WTC11 (cell line): ENCODE measurements at regions of chr5 and their contacts with region 1.

Region 1: GRCh38 chr5:69024241-69024651 is 69.6 kb upstream of the SLC30A5 start:
- DNase-seq: peak; percentile 20
- ATAC-seq: peak; percentile 78
- H3K4me3 Mint-ChIP-seq: no peak overlapping the region
- H3K27ac Mint-ChIP-seq: no peak overlapping the region
- H3K4me1 Mint-ChIP-seq: peaks cover 2% of the 10 kb centered on the region; the same call in 1 of the 2 replicates
- H3K27me3 Mint-ChIP-seq: no peaks in the 10 kb centered on the region; the same call in 1 of the 2 replicates
- CTCF ChIP-seq: peak; percentile 66

Region 2: GRCh38 chr5:69083412-69083811 is 59.2 kb after region 1 on chr5:
- CTCF ChIA-PET with region 1: interaction called, 10 read pairs
- POLR2A ChIA-PET with region 1: no interaction called
- DNase-seq: peak; percentile 35
- ATAC-seq: peak; percentile 100
- H3K4me3 Mint-ChIP-seq: no peak overlapping the region
- H3K27ac Mint-ChIP-seq: no peak overlapping the region
- H3K4me1 Mint-ChIP-seq: peaks cover 4% of the 10 kb centered on the region
- H3K27me3 Mint-ChIP-seq: no peaks in the 10 kb centered on the region
- CTCF ChIP-seq: no peak